ENCODE measurements at regions of chr5 and their contacts with region 1.

Region 1: GRCh38 chr5:139574641-139575312 is 13.6 kb downstream of the UBE2D2 start:
- DNase-seq: peak; percentile 58
- H3K4me3 ChIP-seq: no peak overlapping the region
- H3K27ac ChIP-seq: no peak overlapping the region
- H3K4me1 ChIP-seq: peaks cover 17% of the 10 kb centered on the region
- H3K27me3 ChIP-seq: no peaks in the 10 kb centered on the region
- CTCF ChIP-seq: peak; percentile 45 to 49
- POLR2A ChIP-seq: no peak

Region 2: GRCh38 chr5:139524932-139525585 is 49.7 kb before region 1 on chr5:
- CTCF ChIA-PET with region 1: interaction called, 3 read pairs
- POLR2A ChIA-PET with region 1: no interaction called
- dilution Hi-C with region 1: loop called (anchors 5 kb)
- intact Hi-C with region 1: no loop called
- DNase-seq: no peak
- H3K4me3 ChIP-seq: no peak overlapping the region
- H3K27ac ChIP-seq: no peak overlapping the region
- H3K4me1 ChIP-seq: no peaks in the 10 kb centered on the region
- H3K27me3 ChIP-seq: no peaks in the 10 kb centered on the region
- CTCF ChIP-seq: no peak
- POLR2A ChIP-seq: no peak

Region 3: DNA sequence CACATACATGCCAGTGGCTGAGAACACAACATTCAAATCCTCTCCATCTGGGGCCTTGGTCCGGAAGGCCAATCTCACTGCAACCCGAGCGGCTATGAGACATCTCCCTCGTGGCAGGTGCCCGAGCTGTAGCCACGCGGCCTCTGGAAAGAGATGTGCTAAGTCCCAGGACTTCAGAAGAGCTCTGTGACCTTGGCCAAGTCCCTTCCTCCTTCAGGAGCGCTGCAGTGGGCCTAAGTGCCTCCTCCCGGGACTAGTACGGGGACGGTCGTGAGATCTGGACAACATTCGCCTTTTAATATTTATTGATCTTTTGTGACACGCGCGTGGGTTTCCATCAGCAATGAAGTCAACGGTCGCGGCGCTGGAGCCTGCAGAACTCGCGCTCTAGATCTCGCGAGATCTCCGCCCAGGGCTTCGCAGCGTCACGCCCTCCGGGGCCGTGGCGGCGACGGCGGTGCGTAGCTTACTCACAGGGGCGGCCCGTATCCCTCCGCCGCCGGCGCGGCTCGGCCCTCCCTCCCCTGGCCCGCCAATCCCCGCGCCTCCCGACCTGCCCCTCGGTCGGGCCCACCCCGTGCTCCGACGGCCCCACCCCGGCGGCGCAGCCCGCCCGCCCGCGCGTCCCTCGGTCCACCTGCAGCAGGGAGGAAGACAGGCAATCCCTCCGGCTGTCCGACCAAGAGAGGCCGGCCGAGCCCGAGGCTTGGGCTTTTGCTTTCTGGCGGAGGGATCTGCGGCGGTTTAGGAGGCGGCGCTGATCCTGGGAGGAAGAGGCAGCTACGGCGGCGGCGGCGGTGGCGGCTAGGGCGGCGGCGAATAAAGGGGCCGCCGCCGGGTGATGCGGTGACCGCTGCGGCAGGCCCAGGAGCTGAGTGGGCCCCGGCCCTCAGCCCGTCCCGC is 13.8 kb before region 1 on chr5 and contains the start of gene UBE2D2:
- CTCF ChIA-PET with region 1: interaction called, 57 read pairs
- POLR2A ChIA-PET with region 1: interaction called, 4 read pairs
- dilution Hi-C with region 1: no loop called
- intact Hi-C with region 1: no loop called
- DNase-seq: peak; percentile 97
- H3K4me3 ChIP-seq: peak within 1 kb of the TSS; percentile 71 to 92 (median 85)
- H3K27ac ChIP-seq: peak within 1 kb of the TSS; percentile 82
- H3K4me1 ChIP-seq: peaks cover 31% of the 10 kb centered on the region
- H3K27me3 ChIP-seq: no peaks in the 10 kb centered on the region
- CTCF ChIP-seq: no peak
- POLR2A ChIP-seq: peak; percentile 89
- total RNA-seq, gene UBE2D2: 156 and 172 TPM in 2 replicates

Region 4: GRCh38 chr5:139593716-139594319 is 19.0 kb after region 1 on chr5:
- CTCF ChIA-PET with region 1: interaction called, 15 read pairs
- POLR2A ChIA-PET with region 1: no interaction called
- dilution Hi-C with region 1: no loop called
- intact Hi-C with region 1: no loop called
- DNase-seq: no peak
- H3K4me3 ChIP-seq: no peak overlapping the region
- H3K27ac ChIP-seq: no peak overlapping the region
- H3K4me1 ChIP-seq: peaks cover 8% of the 10 kb centered on the region
- H3K27me3 ChIP-seq: no peaks in the 10 kb centered on the region
- CTCF ChIP-seq: no peak
- POLR2A ChIP-seq: no peak

Region 5: GRCh38 chr5:140157032-140157803 is 582.4 kb after region 1 on chr5:
- CTCF ChIA-PET with region 1: no interaction called
- POLR2A ChIA-PET with region 1: no interaction called
- dilution Hi-C with region 1: no loop called
- intact Hi-C with region 1: no loop called
- DNase-seq: peak; percentile 75
- H3K4me3 ChIP-seq: peak overlapping the region in 2 of 3 experiments; percentile 19 to 24
- H3K27ac ChIP-seq: no peak overlapping the region
- H3K4me1 ChIP-seq: peaks cover 4% of the 10 kb centered on the region
- H3K27me3 ChIP-seq: no peaks in the 10 kb centered on the region
- CTCF ChIP-seq: peak; percentile 81 to 86
- POLR2A ChIP-seq: no peak